ENCODE measurements at regions of chr6 and their contacts with region 1.

Region 1: DNA sequence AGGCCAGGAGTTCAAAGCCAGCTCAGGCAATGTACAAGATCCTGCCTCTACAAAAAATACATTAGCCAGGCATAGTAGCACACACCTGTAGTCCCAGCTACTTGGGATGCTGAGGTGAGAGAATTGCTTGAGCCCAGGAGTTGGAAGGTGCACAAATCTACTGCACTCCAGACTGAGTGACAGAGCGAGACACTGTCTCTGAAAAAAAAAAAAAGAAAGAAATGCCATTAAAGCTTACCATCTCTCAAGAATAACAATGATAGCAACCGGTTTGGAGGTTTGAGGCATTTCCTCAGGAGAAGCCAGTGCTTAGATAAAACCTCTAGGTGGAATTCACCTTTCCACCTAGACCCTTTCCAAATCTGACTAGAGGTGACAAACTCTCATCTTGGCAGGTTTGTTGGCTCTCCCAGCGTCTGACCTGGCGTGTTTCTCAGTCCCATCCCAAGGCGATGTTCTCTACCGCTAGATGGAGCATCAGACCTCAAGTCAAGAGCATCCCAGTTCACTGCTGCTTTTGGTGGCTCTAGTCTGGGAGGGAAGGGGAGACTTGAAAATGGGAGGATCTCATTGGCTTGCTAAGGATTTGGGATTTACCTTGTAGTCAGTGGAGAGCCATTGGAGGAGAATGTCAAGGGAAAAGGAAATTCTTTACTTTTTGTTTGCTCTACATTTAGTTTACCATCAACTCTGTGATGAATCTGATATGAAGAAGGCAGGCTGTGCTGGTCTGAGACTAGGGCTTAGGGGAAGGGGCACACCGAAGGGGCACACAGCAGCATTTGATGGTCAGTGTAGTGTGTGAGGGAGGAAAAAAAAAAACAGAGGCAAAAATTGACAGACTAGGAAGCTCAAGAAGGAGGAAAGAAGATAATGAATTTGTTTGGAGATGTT is 67.9 kb downstream of the NCOA7 start:
- DNase-seq: peak; percentile 67
- H3K4me3 ChIP-seq: no peak overlapping the region
- H3K27ac ChIP-seq: no peak overlapping the region
- H3K4me1 ChIP-seq: no peaks in the 10 kb centered on the region
- H3K27me3 ChIP-seq: no peaks in the 10 kb centered on the region
- CTCF ChIP-seq: peak; percentile 32 to 75 (median 60)
- POLR2A ChIP-seq: no peak

Region 2: DNA sequence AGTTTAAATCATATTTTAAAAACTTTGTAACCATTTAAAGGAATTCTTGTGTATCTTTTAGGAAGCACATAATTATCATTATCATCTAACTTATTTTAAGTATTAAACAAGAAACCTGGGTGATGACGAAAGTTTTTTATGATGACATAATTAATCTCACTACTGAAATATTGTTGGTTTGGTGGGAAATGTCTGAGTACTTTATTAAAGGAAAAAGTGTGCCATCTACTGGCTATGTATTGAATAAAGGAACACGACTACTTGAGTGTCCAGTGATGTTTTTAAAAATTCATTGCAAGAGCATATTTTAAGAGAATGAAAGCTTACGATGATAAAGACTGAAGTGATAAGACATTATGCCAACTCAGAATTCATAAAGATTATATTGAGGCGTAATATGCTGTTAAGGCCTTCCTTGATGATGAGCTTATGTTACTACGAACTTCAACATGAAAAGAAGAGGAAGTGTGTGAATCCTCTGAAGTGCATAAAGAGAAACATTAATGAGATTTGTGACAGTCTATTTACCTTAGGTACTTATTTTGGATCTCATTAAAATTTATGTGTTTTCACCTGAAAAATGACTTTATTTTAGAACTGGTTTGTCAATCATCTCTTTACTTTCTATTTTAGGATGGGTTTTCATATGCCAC is 115.7 kb after region 1 on chr6:
- intact Hi-C with region 1: loop called (anchors 5 kb)
- DNase-seq: no peak
- H3K4me3 ChIP-seq: no peak overlapping the region
- H3K27ac ChIP-seq: no peak overlapping the region
- H3K4me1 ChIP-seq: no peaks in the 10 kb centered on the region
- H3K27me3 ChIP-seq: no peaks in the 10 kb centered on the region
- CTCF ChIP-seq: peak in 3 of 4 experiments; percentile 43 to 68 (median 66)
- POLR2A ChIP-seq: no peak

Measured in prostate gland (tissue), 2 donors.